HEK293 (cell line): ENCODE measurements at regions of chr12 and their contacts with region 1.

Region 1: DNA sequence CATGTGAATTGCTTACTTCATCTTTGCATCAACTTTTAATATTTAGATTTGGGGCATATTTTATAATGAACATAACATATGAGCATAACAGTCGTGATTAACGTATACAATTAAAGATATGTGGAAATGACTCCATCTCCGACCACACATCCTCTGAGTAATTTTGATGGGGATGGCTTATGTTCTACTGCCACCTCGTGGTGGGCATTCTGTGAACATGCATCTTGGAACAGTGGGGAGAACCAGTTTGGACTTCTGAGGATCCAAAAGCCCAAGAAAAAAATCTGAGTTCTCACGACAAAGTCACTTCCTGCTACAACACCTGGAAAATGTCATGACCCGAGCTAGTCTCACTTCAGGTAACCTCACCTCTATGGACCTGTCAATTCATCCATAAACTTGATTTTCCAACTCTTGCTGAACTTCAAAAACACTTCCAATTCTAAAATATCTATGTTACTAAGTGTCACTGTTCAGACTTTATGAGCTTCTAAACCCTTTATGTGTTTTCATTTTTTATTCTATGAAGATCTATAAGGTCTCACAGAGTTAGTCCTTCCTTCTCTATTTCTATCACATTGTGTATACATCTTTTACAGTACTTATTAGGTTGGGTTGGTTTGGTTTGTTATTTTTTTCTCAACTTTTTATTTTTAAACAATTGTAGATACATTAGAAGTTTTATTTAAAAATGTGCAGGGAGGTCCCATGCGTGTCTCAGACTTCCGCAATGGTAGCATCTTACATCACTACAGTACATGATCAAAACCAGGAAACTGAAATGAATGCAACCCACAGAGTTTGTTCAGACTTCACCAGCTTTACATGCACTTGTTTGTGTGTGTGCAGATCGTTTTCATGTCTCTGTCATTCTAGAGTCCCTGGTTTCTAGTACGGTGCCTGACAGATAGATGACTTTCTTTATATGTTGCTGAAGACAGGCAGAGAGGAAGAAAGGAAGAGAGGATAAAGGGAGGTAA is 38.2 kb upstream of the STAB2 start:
- H3K4me3 ChIP-seq: no peak overlapping the region
- H3K27ac ChIP-seq: no peak overlapping the region
- H3K4me1 ChIP-seq: no peaks in the 10 kb centered on the region
- CTCF ChIP-seq: peak; percentile 62

Region 2: DNA sequence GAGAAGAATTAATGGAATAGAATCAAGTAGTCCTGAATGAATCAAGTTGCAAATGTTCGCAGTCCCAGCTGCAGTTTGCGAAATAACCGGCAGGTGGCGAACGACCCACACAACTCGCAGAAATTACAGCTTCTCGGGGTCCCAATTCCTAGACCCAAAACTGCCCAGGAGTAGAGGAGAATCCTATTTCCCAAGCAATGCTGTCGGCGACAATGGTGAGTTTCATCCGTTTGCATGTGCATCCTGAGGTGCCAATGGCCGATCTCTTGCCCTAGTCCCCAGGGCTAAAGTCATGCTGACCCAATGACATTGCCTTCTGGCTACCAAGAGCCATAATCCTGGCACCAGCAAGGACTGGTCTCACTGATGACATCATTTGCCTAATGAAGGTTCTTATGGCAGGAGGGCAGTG is 600.0 kb before region 1 on chr12:
- CTCF ChIA-PET with region 1: interaction called, 77 read pairs
- POLR2A ChIA-PET with region 1: no interaction called
- H3K4me3 ChIP-seq: no peak overlapping the region
- H3K27ac ChIP-seq: no peak overlapping the region
- H3K4me1 ChIP-seq: no peaks in the 10 kb centered on the region
- CTCF ChIP-seq: peak; percentile 25; the same call in 1 of the 2 replicates

Region 3: DNA sequence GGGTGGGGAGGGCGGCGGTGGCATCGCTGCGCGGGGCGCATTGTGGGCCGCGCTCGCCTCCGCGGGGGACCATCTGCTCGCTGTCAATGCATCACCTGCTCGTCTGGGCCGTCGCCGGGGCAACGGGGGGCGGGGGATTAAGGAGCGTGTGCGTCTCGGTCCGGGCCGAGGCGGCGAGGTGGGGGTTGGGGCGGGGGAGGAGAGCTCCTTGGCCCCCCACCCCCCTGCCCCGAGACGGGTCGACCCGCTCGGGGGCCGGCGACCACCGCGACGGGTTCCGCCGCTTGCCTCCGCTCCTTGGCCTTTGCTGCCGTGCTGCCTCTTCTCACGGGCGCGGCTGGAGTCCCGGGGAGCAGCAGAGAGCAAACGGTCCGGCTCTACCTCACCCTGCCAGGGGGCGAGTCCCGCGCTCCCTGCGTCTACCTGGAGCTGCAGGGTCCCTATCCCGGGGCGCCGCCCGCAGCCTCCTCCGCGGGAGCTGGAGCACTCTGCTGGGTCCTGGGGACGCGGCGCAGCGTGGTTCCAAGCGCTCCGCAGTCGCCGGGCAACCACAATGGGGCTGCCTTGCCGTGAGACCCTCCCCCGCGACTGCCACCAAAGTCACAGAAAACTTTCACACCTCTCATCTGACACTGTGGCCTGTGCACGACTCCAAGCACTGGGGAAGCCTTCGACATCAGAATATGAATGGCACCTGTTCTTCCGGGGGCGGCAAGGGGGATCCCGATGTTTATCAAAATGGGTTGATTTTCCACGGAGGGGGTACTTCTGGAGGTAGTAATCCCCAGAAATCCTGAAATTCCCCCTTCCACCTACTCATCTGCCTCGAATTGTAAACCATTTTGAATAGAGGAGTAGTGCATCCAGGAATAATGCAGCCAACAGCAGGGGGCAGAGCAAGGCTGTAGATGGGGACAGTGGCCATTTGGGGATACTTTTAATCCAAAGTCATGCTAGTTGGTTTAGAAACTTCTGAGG is 53.1 kb before region 1 on chr12 and contains the start of gene C12orf42:
- CTCF ChIA-PET with region 1: interaction called, 21 read pairs
- POLR2A ChIA-PET with region 1: no interaction called
- H3K4me3 ChIP-seq: peak within 1 kb of the TSS; percentile 44
- H3K27ac ChIP-seq: no peak within 1 kb of the TSS
- H3K4me1 ChIP-seq: peaks cover 2% of the 10 kb centered on the region; the same call in 1 of the 2 replicates
- CTCF ChIP-seq: peak; percentile 34; the same call in 1 of the 2 replicates

Region 4: GRCh38 chr12:103513875-103514274 is 35.0 kb before region 1 on chr12:
- CTCF ChIA-PET with region 1: interaction called, 11 read pairs
- POLR2A ChIA-PET with region 1: no interaction called
- H3K4me3 ChIP-seq: no peak overlapping the region
- H3K27ac ChIP-seq: no peak overlapping the region
- H3K4me1 ChIP-seq: no peaks in the 10 kb centered on the region
- CTCF ChIP-seq: no peak

Region 5: GRCh38 chr12:103571286-103571685 is 22.4 kb after region 1 on chr12:
- CTCF ChIA-PET with region 1: interaction called, 10 read pairs
- POLR2A ChIA-PET with region 1: no interaction called
- H3K4me3 ChIP-seq: no peak overlapping the region
- H3K27ac ChIP-seq: no peak overlapping the region
- H3K4me1 ChIP-seq: no peaks in the 10 kb centered on the region
- CTCF ChIP-seq: no peak